ENCODE measurements at regions of chr10 and their contacts with region 1.

Region 1: GRCh38 chr10:100327007-100327717 is 2.9 kb downstream of the PKD2L1 start:
- DNase-seq: no peak
- ATAC-seq: peak; percentile 38 to 72 (median 52)
- H3K4me3 ChIP-seq: no peak overlapping the region
- H3K27ac ChIP-seq: no peak overlapping the region
- H3K4me1 ChIP-seq: no peaks in the 10 kb centered on the region
- H3K27me3 ChIP-seq: no peaks in the 10 kb centered on the region
- CTCF ChIP-seq: no peak
- POLR2A ChIP-seq: no peak

Region 2: GRCh38 chr10:100878291-100878910 is 551.2 kb after region 1 on chr10:
- intact Hi-C with region 1: loop called in 1 of 2 experiments (anchors 10 kb)
- DNase-seq: peak; percentile 34 to 66 (median 61)
- ATAC-seq: peak; percentile 87 to 94 (median 90)
- H3K4me3 ChIP-seq: no peak overlapping the region
- H3K27ac ChIP-seq: no peak overlapping the region
- H3K4me1 ChIP-seq: peaks cover 0 to 23% (median 6%) of the 10 kb centered on the region in 4 donors
- H3K27me3 ChIP-seq: no peaks in the 10 kb centered on the region
- CTCF ChIP-seq: peak; percentile 61 to 76 (median 70)
- POLR2A ChIP-seq: no peak